T-cell (primary cell): ENCODE measurements at regions of chr1 and their contacts with region 1.

Region 1: GRCh38 chr1:172609528-172609927 is 49.4 kb upstream of the FASLG start:
- DNase-seq: peak in 1 of 35 experiments; percentile 60
- ATAC-seq: peak; percentile 58 to 81 (median 70)
- H3K4me3 ChIP-seq: no peak overlapping the region
- H3K4me3 Mint-ChIP-seq: no peak overlapping the region
- H3K27ac ChIP-seq: no peak overlapping the region
- H3K27ac Mint-ChIP-seq: no peak overlapping the region
- H3K4me1 ChIP-seq: no peaks in the 10 kb centered on the region
- H3K4me1 Mint-ChIP-seq: peaks cover 8 to 18% (median 8%) of the 10 kb centered on the region in 3 donors
- H3K27me3 ChIP-seq: no peaks in the 10 kb centered on the region
- H3K27me3 Mint-ChIP-seq: no peaks in the 10 kb centered on the region

Region 2: DNA sequence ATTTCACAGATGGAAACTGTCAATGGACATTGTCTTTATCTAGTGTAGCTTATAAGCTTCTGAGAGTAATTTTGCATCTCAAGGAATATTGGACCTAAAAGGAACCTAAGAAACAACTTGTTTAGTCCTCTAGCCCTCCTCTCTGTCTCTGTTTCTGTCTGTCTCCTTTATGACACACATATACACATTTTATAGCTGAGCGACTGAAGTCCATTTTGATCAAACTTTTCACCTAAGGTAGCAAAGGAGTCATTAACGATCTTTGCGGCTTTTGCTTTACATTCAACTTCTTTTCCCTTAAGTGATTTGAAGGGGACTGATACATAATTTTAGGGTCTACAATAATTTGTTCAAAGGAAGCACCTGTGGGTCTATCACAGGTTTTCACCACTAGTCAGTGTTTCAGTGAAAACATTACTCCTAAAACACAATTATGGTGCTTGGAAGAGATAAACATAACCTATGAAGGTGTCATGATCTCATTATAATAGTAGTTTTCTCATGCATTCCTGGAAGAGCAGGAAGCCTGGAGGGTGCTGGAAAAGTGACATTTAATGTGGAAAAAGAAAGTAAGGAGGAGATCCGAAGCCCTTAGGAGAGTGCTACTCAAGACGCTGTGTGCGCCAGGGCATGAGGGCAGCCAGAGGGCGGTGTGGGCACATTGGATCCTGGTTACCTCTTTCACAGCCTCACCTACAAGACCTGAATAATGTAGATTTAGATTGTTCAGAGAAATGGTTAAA is 519.6 kb before region 1 on chr1:
- CTCF ChIA-PET with region 1: no interaction called
- POLR2A ChIA-PET with region 1: no interaction called
- DNase-seq: peak; percentile 12 to 76 (median 49)
- ATAC-seq: peak; percentile 79 to 91 (median 83)
- H3K4me3 ChIP-seq: no peak overlapping the region
- H3K4me3 Mint-ChIP-seq: no peak overlapping the region
- H3K27ac ChIP-seq: no peak overlapping the region
- H3K27ac Mint-ChIP-seq: no peak overlapping the region
- H3K4me1 ChIP-seq: no peaks in the 10 kb centered on the region
- H3K4me1 Mint-ChIP-seq: peaks cover 4 to 7% (median 6%) of the 10 kb centered on the region in 3 donors
- H3K27me3 ChIP-seq: no peaks in the 10 kb centered on the region
- H3K27me3 Mint-ChIP-seq: peaks cover 0 to 2% of the 10 kb centered on the region in 2 donors

Region 3: DNA sequence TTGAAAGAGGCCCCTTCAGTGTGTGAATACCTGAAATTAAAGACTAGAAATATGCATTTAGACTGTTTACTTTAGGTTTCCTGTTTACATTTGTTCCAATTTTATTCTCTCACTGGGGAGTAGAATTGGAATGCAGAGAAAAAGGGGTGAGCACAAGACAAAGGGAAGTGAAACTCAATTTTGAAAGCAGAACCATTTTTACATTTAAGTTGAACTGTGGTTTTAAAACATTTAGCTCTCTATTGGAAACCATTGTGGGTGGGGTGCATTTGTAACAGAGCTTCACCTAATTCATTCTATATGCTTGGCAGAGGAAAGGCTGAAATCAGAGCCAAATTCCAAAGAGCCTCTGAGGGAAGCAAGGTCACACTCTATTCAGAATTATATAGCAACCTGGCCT is 424.3 kb before region 1 on chr1:
- CTCF ChIA-PET with region 1: no interaction called
- POLR2A ChIA-PET with region 1: no interaction called
- DNase-seq: no peak
- ATAC-seq: no peak
- H3K4me3 ChIP-seq: no peak overlapping the region
- H3K4me3 Mint-ChIP-seq: no peak overlapping the region
- H3K27ac ChIP-seq: no peak overlapping the region
- H3K27ac Mint-ChIP-seq: peak overlapping the region; percentile 1 to 36
- H3K4me1 ChIP-seq: peaks cover 2 to 13% of the 10 kb centered on the region in 2 experiments
- H3K4me1 Mint-ChIP-seq: peaks cover 27 to 59% (median 36%) of the 10 kb centered on the region in 3 donors
- H3K27me3 ChIP-seq: no peaks in the 10 kb centered on the region
- H3K27me3 Mint-ChIP-seq: no peaks in the 10 kb centered on the region

Region 4: GRCh38 chr1:172622541-172622940 is 13.0 kb after region 1 on chr1:
- CTCF ChIA-PET with region 1: no interaction called
- POLR2A ChIA-PET with region 1: no interaction called
- DNase-seq: no peak
- ATAC-seq: no peak
- H3K4me3 ChIP-seq: no peak overlapping the region
- H3K4me3 Mint-ChIP-seq: no peak overlapping the region
- H3K27ac ChIP-seq: no peak overlapping the region
- H3K27ac Mint-ChIP-seq: no peak overlapping the region
- H3K4me1 ChIP-seq: peaks cover 3 to 4% of the 10 kb centered on the region in 2 experiments
- H3K4me1 Mint-ChIP-seq: peaks cover 3 to 13% (median 6%) of the 10 kb centered on the region in 3 donors
- H3K27me3 ChIP-seq: no peaks in the 10 kb centered on the region
- H3K27me3 Mint-ChIP-seq: no peaks in the 10 kb centered on the region

Region 5: DNA sequence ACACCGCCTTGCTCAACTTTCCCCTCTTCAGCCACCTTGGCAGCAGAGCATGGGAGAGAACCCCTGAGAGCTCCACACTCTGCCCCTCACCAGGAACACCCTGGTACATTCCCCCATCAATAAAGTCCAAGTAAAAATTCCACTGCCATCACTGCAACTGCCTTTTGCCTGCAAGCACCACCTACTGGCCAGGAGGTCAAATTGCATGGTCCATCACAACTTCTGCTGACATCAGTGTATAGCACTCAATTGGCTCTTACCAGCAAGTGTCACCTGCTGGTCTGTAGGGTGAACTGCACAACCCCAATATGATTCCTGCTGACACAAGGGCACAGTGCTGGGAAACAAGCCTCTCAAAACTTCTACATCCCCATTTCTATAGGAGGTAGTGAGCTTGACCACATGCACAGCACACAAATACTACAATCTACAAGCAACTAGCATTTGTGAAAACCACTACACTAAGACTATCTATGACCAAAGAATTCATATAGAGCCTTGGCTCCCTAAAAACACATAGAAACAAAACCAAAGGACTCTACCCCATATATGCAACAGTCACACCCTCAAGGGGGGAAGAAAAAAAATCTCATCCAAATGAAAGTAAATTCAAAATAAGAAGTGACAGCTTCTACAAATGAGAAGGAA is 118.6 kb after region 1 on chr1:
- CTCF ChIA-PET with region 1: interaction called, 6 to 177 read pairs
- POLR2A ChIA-PET with region 1: interaction called in 1 of 2 experiments, 3 read pairs
- DNase-seq: peak in 21 of 35 experiments; percentile 13 to 67 (median 23)
- ATAC-seq: peak; percentile 67 to 80 (median 72)
- H3K4me3 ChIP-seq: no peak overlapping the region
- H3K4me3 Mint-ChIP-seq: no peak overlapping the region
- H3K27ac ChIP-seq: no peak overlapping the region
- H3K27ac Mint-ChIP-seq: no peak overlapping the region
- H3K4me1 ChIP-seq: peaks cover 0 to 19% of the 10 kb centered on the region in 2 experiments
- H3K4me1 Mint-ChIP-seq: peaks cover 12 to 31% (median 16%) of the 10 kb centered on the region in 3 donors
- H3K27me3 ChIP-seq: no peaks in the 10 kb centered on the region
- H3K27me3 Mint-ChIP-seq: no peaks in the 10 kb centered on the region

Region 6: DNA sequence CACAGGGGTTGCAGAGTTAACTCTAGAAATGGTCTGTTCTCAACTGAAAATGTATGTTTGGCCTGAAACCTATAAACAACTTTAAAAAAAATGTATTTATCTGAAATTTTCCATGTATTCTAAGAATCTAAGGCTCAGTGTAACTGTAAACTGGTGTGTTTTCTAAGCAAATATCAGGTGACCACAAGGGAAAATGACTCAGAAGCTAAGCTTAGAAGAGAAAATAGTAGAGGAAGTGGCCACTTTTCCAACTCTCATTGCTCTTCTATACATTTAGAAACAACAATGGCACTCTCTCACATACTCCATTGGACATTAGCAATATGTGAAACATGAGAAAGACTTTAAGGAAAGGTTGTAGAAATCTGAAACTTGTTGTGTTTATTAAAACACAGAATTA is 433.7 kb after region 1 on chr1:
- CTCF ChIA-PET with region 1: no interaction called
- POLR2A ChIA-PET with region 1: no interaction called
- DNase-seq: no peak
- ATAC-seq: no peak
- H3K4me3 ChIP-seq: no peak overlapping the region
- H3K4me3 Mint-ChIP-seq: no peak overlapping the region
- H3K27ac ChIP-seq: no peak overlapping the region
- H3K27ac Mint-ChIP-seq: no peak overlapping the region
- H3K4me1 ChIP-seq: no peaks in the 10 kb centered on the region
- H3K4me1 Mint-ChIP-seq: peaks cover 10 to 14% (median 12%) of the 10 kb centered on the region in 3 donors
- H3K27me3 ChIP-seq: no peaks in the 10 kb centered on the region
- H3K27me3 Mint-ChIP-seq: no peaks in the 10 kb centered on the region